Activated naive CD4-positive, alpha-beta T cell treated with anti-CD3 and anti-CD28 coated beads for 36 hours (primary cell): ENCODE measurements at regions of chr3 and their contacts with region 1.

Region 1: GRCh38 chr3:112734718-112735350 is 93.9 kb upstream of the CCDC80 start:
- DNase-seq: peak; percentile 79
- H3K4me3 Mint-ChIP-seq: no peak overlapping the region
- H3K27ac Mint-ChIP-seq: no peak overlapping the region
- H3K4me1 Mint-ChIP-seq: peaks cover 39% of the 10 kb centered on the region
- H3K27me3 Mint-ChIP-seq: no peaks in the 10 kb centered on the region

Region 2: GRCh38 chr3:112642912-112643506 is 91.8 kb before region 1 on chr3:
- CTCF ChIA-PET with region 1: interaction called, 54 read pairs
- intact Hi-C with region 1: loop called (anchors 1 kb)
- DNase-seq: peak; percentile 92
- H3K4me3 Mint-ChIP-seq: peak overlapping the region; percentile 55
- H3K27ac Mint-ChIP-seq: no peak overlapping the region
- H3K4me1 Mint-ChIP-seq: peaks cover 14% of the 10 kb centered on the region
- H3K27me3 Mint-ChIP-seq: peaks cover 10% of the 10 kb centered on the region

Region 3: GRCh38 chr3:112761062-112761638 is 26.3 kb after region 1 on chr3:
- CTCF ChIA-PET with region 1: interaction called, 13 read pairs
- intact Hi-C with region 1: no loop called
- DNase-seq: no peak
- H3K4me3 Mint-ChIP-seq: no peak overlapping the region
- H3K27ac Mint-ChIP-seq: no peak overlapping the region
- H3K4me1 Mint-ChIP-seq: peaks cover 1% of the 10 kb centered on the region
- H3K27me3 Mint-ChIP-seq: no peaks in the 10 kb centered on the region

Region 4: DNA sequence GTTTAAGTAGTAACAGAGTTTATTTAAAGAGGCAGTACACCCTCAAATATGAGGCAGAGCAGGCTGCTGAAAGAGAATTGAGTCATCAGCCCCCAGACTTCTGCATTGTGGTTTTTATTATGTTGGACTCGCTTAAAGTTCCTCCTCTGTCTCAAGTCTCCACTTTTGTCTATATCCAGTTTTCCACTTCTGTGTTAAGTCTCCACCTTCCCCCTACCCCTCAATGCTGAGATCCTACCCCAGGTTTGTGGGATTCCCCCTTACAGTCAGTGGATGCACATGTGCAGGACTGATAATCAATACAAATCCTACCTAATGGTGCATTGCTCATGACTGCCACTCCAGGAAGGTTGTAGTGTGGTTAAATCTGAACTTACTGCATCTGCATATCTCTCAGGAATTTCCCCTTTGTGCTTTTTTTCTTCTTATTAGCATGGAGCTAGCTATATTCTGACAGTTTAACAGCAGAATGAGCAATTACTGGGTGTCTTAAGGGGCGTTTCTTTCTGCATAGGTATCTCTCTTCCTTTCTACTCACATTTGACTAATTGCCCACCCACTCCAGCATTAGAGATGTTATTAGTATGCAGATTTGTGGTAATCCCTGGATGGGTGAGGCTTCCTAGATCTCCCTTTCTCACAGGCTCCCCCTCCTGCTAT is 123.7 kb after region 1 on chr3:
- CTCF ChIA-PET with region 1: interaction called, 3 read pairs
- intact Hi-C with region 1: loop called (anchors 2 kb)
- DNase-seq: peak; percentile 22
- H3K4me3 Mint-ChIP-seq: peak overlapping the region; percentile 14
- H3K27ac Mint-ChIP-seq: peak overlapping the region; percentile 64
- H3K4me1 Mint-ChIP-seq: peaks cover 22% of the 10 kb centered on the region
- H3K27me3 Mint-ChIP-seq: no peaks in the 10 kb centered on the region

Region 5: GRCh38 chr3:112990672-112991602 is 256.1 kb after region 1 on chr3 and contains the start of gene GTPBP8:
- CTCF ChIA-PET with region 1: interaction called, 10 read pairs
- intact Hi-C with region 1: no loop called
- DNase-seq: peak; percentile 94
- H3K4me3 Mint-ChIP-seq: peak within 1 kb of the TSS; percentile 94
- H3K27ac Mint-ChIP-seq: peak within 1 kb of the TSS; percentile 96
- H3K4me1 Mint-ChIP-seq: peaks cover 68% of the 10 kb centered on the region
- H3K27me3 Mint-ChIP-seq: no peaks in the 10 kb centered on the region
- total RNA-seq, gene GTPBP8: 62.8 to 68.9 TPM

Region 6: DNA sequence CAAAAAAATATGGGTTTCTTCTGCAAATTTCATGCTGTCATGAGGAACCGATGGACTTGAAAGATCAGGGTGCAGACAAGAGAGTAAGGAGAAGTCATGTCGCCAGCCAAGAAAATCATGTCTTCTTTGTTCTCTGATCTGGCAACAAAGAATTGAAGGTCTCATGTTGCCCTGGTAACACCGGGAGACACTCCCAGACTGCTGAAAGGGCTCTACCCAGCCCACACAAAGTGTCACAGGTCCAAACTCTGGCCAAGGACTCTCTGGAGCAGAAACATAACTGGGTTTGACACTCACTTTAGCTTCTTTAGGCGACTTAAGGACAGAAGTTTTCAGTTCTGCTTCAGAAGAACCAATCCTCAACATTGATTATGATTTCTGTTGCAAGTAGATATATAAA is 840.4 kb after region 1 on chr3:
- CTCF ChIA-PET with region 1: no interaction called
- intact Hi-C with region 1: loop called (anchors 5 kb)
- DNase-seq: no peak
- H3K4me3 Mint-ChIP-seq: no peak overlapping the region
- H3K27ac Mint-ChIP-seq: no peak overlapping the region
- H3K4me1 Mint-ChIP-seq: peaks cover 8% of the 10 kb centered on the region
- H3K27me3 Mint-ChIP-seq: no peaks in the 10 kb centered on the region